Activated CD4-positive, alpha-beta T cell treated with anti-CD3 and anti-CD28 coated beads, Interleukin-2, amount 10 ng/mL, durations not matched to agents 24 days and 14 days (primary cell): ENCODE measurements at regions of chr7 and their contacts with region 1.

Region 1: GRCh38 chr7:30412810-30413504 is 65.6 kb downstream of the NOD1 start:
- DNase-seq: peak; percentile 61
- H3K4me3 Mint-ChIP-seq: no peak overlapping the region
- H3K27ac Mint-ChIP-seq: no peak overlapping the region
- H3K4me1 Mint-ChIP-seq: no peaks in the 10 kb centered on the region
- H3K27me3 Mint-ChIP-seq: no peaks in the 10 kb centered on the region

Region 2: GRCh38 chr7:30041521-30042269 is 371.3 kb before region 1 on chr7:
- intact Hi-C with region 1: no loop called
- DNase-seq: no peak
- H3K4me3 Mint-ChIP-seq: no peak overlapping the region
- H3K27ac Mint-ChIP-seq: no peak overlapping the region
- H3K4me1 Mint-ChIP-seq: peaks cover 7% of the 10 kb centered on the region
- H3K27me3 Mint-ChIP-seq: no peaks in the 10 kb centered on the region

Region 3: DNA sequence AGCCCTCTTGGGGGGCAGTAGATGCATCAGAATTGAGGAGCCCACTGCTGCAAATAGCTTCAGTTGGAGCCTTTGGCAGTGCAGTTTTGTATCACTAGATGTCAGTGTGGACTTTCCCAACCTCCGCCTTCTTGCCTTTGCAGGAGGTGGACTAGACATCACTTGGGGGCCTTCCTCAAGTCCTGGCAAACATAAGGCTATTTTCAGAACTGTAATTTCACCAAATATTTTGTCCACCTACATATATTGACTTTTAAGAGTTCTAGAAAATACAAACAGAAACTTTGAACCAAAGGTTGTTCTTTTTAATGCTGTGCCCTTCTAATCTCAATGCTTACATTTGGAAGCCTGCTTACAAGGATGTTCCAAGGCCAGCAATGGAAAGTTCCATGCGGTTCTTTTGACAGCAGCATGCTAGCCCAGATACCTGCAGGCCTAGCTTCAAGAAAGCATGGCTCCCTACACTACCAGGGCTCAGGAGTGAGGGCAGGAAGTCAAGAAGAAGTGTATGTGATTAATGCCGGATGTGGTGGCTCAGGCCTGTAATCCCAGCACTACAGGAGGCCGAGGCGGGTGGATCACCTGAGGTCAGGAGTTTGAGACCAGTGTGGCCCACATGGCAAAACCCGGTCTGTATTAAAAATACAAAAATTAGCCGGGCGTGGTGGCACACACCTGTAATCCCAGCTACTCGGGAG is 136.6 kb before region 1 on chr7:
- intact Hi-C with region 1: loop called (anchors 1 kb)
- DNase-seq: peak; percentile 87
- H3K4me3 Mint-ChIP-seq: no peak overlapping the region
- H3K27ac Mint-ChIP-seq: no peak overlapping the region
- H3K4me1 Mint-ChIP-seq: peaks cover 6% of the 10 kb centered on the region
- H3K27me3 Mint-ChIP-seq: peaks cover 3% of the 10 kb centered on the region

Region 4: GRCh38 chr7:30594549-30595435 is 181.8 kb after region 1 on chr7 and contains the start of gene GARS1:
- intact Hi-C with region 1: no loop called
- DNase-seq: peak; percentile 97
- H3K4me3 Mint-ChIP-seq: peak within 1 kb of the TSS; percentile 94
- H3K27ac Mint-ChIP-seq: peak within 1 kb of the TSS; percentile 98
- H3K4me1 Mint-ChIP-seq: peaks cover 49% of the 10 kb centered on the region
- H3K27me3 Mint-ChIP-seq: no peaks in the 10 kb centered on the region
- total RNA-seq, gene GARS1: 261 and 262 TPM in 2 replicates

Region 5: GRCh38 chr7:30906515-30907240 is 493.7 kb after region 1 on chr7:
- intact Hi-C with region 1: no loop called
- DNase-seq: no peak
- H3K4me3 Mint-ChIP-seq: no peak overlapping the region
- H3K27ac Mint-ChIP-seq: no peak overlapping the region
- H3K4me1 Mint-ChIP-seq: no peaks in the 10 kb centered on the region
- H3K27me3 Mint-ChIP-seq: no peaks in the 10 kb centered on the region